GM12878 (cell line): ENCODE measurements at regions of chr12 and their contacts with region 1.

Region 1: GRCh38 chr12:104720339-104721038 is 237.6 kb downstream of the SLC41A2 start:
- DNase-seq: no peak
- ATAC-seq: peak; percentile 71
- H3K4me3 ChIP-seq: peak overlapping the region; percentile 40
- H3K27ac ChIP-seq: peak overlapping the region; percentile 92
- H3K4me1 ChIP-seq: peaks cover 35% of the 10 kb centered on the region
- H3K27me3 ChIP-seq: no peaks in the 10 kb centered on the region; a peak in 1 of 4 replicates
- CTCF ChIP-seq: no peak
- EP300 ChIP-seq: peak; percentile 54 to 68; a peak in 2 of 4 replicates
- POLR2A ChIP-seq: peak; percentile 56; the same call in 1 of the 2 replicates
- RAD21 ChIP-seq: no peak

Region 2: GRCh38 chr12:104653730-104654664 is 66.5 kb before region 1 on chr12:
- CTCF ChIA-PET with region 1: no interaction called
- POLR2A ChIA-PET with region 1: no interaction called
- RAD21 ChIA-PET with region 1: no interaction called
- SMC1A ChIA-PET with region 1: no interaction called
- in situ Hi-C with region 1: no loop called
- intact Hi-C with region 1: loop called (anchors 5 kb)
- DNase-seq: no peak
- ATAC-seq: peak; percentile 88
- H3K4me3 ChIP-seq: no peak overlapping the region
- H3K27ac ChIP-seq: no peak overlapping the region
- H3K4me1 ChIP-seq: peaks cover 4% of the 10 kb centered on the region
- H3K27me3 ChIP-seq: no peaks in the 10 kb centered on the region
- CTCF ChIP-seq: peak; percentile 28 to 54 (median 50); a peak in 5 of 6 replicates
- EP300 ChIP-seq: no peak
- POLR2A ChIP-seq: no peak
- RAD21 ChIP-seq: peak; percentile 58